ENCODE measurements at regions of chr9 and their contacts with region 1.

Region 1: DNA sequence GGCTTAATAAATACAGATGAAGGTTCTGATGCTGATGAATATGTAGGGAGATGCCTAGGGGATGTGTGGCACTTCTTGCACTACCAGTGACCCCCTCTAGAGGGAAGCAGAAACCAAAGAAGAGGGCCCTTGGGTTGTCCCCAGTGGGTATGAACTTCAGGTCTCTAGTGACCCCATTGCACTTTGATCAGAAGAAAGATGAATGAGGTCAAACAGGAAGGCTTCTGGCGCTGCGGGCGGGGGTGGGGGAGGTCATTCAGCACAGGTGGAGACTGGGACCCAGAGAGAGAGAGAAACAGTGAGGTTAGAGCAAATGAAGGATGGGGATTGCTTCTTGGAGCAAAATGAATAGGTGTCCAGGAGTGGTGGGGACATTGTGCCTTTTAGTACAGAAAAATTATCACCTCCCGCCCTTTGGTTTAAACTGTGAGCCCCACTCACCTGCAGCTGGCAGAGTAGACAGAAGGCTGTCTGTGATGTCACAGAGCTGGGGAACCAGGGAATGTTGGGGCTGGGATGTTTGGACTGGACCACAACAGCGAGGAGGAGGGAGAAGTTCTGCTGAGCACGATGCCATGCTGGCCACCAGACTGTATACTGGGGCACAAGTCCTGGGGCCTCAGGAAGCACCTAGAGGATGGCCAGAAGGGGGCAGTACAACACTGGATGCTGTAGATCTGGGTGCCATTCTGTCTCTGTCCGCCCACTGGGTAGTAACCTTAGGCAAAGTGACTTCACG is at the start of gene TEX48:
- DNase-seq: no peak
- H3K4me3 ChIP-seq: no peak within 1 kb of the TSS
- CTCF ChIP-seq: peak; percentile 74

Region 2: GRCh38 chr9:114405294-114406034 is 276.3 kb before region 1 on chr9:
- CTCF ChIA-PET with region 1: interaction called, 21 read pairs
- POLR2A ChIA-PET with region 1: no interaction called
- DNase-seq: no peak
- H3K4me3 ChIP-seq: no peak overlapping the region
- CTCF ChIP-seq: peak; percentile 82

Region 3: DNA sequence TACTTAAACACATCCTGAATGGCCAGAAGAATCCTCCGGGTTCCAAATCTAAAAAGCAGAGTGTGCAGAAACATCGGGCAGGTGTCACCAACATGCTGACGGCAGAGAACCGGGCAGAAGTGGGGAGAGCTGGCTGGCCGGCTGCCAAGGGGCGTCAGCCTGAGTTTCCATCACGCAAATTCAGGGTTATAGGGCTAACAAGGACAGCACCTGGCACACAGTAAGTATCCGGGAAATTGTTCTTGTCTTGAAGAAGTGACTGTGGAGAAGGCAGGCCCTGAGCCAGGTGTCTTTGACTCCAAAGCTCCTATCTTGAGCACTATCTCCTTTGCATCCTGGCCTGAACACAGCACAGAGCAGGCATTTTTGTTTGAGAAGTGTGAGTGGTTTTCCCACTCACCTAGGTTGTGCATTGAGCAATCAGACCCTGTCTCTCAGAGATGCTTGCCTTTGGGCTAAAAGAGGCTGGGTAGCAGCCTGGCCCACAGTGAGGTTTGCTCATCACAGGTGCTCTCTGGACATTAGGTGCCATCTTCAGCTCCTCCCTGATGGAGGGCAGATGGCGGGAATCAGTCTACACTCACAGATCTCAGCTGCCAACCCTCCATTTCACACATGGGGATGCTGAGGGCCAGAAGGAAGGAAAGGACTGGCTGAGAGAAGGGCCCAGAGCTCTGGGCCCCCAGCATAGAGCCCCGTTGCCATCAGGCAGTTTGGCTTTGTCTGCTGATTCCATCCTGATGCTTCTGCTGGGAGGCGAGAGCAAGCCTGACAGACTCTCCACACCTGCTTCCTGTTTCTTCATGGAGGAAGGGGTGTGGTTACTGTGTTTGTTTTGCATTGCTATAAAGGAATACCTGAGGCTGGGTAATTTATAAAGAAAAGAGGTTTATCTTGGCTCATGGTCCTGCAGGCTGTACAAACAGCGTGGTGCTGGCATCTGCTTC is 229.3 kb before region 1 on chr9:
- CTCF ChIA-PET with region 1: no interaction called
- POLR2A ChIA-PET with region 1: no interaction called
- DNase-seq: no peak
- H3K4me3 ChIP-seq: no peak overlapping the region
- CTCF ChIP-seq: no peak

Region 4: DNA sequence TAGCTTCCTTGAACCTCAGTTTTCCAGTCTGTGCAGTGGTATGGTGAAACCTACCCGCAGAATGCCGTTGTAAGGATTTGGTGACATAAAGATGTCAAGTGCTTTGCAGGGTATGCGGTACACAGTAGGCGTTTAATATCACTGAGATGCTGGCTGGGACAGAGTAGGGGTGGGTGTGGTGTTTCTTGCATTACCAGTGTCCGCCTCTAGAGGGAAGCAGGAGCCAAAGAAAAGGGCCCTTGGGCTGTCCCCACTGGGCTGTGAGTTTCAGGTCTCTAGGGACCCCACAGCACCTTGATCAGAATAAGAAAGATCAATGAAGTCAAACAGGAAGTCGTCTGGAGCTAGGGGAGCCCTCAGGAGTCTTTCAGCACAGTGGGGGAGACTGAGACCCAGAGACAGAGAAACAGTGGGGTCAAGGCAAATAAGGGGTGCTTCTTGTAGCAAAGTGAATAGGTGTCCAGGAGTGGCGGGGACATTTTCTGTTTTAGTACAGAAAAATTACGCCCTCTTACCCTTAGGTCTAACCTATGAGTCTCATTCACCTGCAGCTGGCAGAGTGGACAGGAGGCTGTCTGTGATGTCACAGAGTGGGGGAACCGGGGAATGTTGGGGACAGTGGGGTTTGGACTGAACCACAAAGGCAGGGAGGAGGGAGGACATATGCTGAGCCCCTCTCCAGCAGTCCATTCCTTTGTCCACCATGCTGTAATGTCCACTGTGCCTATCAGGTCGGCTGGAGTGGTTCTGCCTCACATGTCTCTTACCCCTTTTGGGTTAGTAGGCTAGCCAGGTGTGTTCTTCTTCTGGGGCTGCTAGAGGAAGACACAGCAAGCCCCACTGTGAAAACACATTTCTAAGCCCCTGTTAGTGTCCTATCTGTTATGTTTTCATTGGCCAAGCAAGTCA is 19.4 kb before region 1 on chr9:
- CTCF ChIA-PET with region 1: interaction called, 149 read pairs
- POLR2A ChIA-PET with region 1: no interaction called
- DNase-seq: no peak
- H3K4me3 ChIP-seq: no peak overlapping the region
- CTCF ChIP-seq: peak; percentile 76

Region 5: DNA sequence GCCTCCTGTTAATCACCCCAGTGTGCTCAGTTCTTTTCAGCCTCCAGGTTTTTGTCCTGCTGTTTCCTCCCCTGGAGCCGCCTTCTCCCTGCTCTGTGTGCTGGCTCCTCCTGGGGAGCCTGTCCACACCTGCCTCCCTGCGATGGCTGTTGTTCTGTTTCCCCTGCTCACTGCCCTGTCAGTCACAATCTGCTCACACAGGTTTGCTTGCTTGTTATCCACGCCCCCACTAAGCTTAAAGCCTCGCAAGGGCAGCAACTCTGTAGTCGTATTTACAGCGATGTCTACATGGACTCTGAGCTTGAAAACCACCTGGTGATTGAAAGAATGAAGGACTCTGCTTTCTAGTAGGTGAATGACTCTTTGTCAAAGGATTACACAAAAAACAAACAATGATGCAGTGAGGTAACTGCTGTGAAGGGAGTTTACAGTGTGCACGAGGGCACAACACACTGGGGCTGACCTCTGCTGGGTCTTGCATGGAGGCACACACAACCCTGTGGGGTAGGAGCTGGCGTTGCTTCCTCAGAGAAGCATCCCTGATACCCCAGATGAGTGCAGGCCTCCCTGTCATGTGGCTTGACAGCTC is 39.8 kb after region 1 on chr9:
- CTCF ChIA-PET with region 1: interaction called, 44 read pairs
- POLR2A ChIA-PET with region 1: no interaction called
- DNase-seq: no peak
- H3K4me3 ChIP-seq: no peak overlapping the region; the same call in 1 of the 2 replicates
- CTCF ChIP-seq: no peak

Region 6: GRCh38 chr9:114894801-114895433 is 213.2 kb after region 1 on chr9:
- CTCF ChIA-PET with region 1: interaction called, 28 read pairs
- POLR2A ChIA-PET with region 1: no interaction called
- DNase-seq: peak; percentile 85
- H3K4me3 ChIP-seq: no peak overlapping the region
- CTCF ChIP-seq: no peak